CD4-positive, alpha-beta T cell (primary cell): ENCODE measurements at regions of chr3 and their contacts with region 1.

Region 1: GRCh38 chr3:105691633-105692032 is 177.2 kb downstream of the CBLB start:
- DNase-seq: no peak
- ATAC-seq: no peak
- H3K4me3 ChIP-seq: no peak overlapping the region
- H3K4me3 Mint-ChIP-seq: no peak overlapping the region
- H3K27ac ChIP-seq: no peak overlapping the region
- H3K27ac Mint-ChIP-seq: peak overlapping the region; percentile 26
- H3K4me1 ChIP-seq: no peaks in the 10 kb centered on the region
- H3K4me1 Mint-ChIP-seq: peaks cover 48% of the 10 kb centered on the region
- H3K27me3 ChIP-seq: no peaks in the 10 kb centered on the region
- H3K27me3 Mint-ChIP-seq: no peaks in the 10 kb centered on the region
- CTCF ChIP-seq: no peak

Region 2: DNA sequence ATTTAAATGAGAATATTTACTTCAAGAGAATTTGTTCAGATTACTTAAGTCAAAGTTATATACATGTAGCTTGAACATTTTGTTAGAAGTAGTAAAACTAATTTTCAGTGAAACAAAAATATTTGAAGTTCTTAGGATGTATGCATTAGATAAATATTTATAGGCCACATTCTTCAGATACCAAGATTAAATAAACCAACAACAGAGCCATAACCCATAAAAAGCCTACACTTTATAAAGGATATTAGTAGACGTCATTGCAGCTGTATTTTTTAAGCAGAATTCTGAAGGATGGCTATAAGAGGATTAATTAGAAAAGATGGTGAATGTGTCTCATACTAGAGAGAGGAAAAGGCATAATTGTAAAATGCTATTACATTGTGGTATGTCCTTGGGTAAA is 774.7 kb before region 1 on chr3:
- CTCF ChIA-PET with region 1: no interaction called
- POLR2A ChIA-PET with region 1: no interaction called
- intact Hi-C with region 1: no loop called
- DNase-seq: no peak
- ATAC-seq: no peak
- H3K4me3 ChIP-seq: no peak overlapping the region
- H3K4me3 Mint-ChIP-seq: no peak overlapping the region
- H3K27ac ChIP-seq: no peak overlapping the region
- H3K27ac Mint-ChIP-seq: no peak overlapping the region
- H3K4me1 ChIP-seq: no peaks in the 10 kb centered on the region
- H3K4me1 Mint-ChIP-seq: no peaks in the 10 kb centered on the region
- H3K27me3 ChIP-seq: no peaks in the 10 kb centered on the region
- H3K27me3 Mint-ChIP-seq: no peaks in the 10 kb centered on the region
- CTCF ChIP-seq: no peak

Region 3: GRCh38 chr3:105862217-105862616 is 170.6 kb after region 1 on chr3:
- CTCF ChIA-PET with region 1: no interaction called
- POLR2A ChIA-PET with region 1: no interaction called
- intact Hi-C with region 1: loop called in 1 of 2 experiments (anchors 5 kb)
- DNase-seq: peak in 3 of 14 experiments; percentile 28 to 48 (median 35)
- ATAC-seq: peak; percentile 45
- H3K4me3 ChIP-seq: peak overlapping the region; percentile 8
- H3K4me3 Mint-ChIP-seq: no peak overlapping the region
- H3K27ac ChIP-seq: no peak overlapping the region
- H3K27ac Mint-ChIP-seq: no peak overlapping the region
- H3K4me1 ChIP-seq: peaks cover 4% of the 10 kb centered on the region
- H3K4me1 Mint-ChIP-seq: peaks cover 53% of the 10 kb centered on the region
- H3K27me3 ChIP-seq: no peaks in the 10 kb centered on the region
- H3K27me3 Mint-ChIP-seq: no peaks in the 10 kb centered on the region
- CTCF ChIP-seq: no peak

Region 4: DNA sequence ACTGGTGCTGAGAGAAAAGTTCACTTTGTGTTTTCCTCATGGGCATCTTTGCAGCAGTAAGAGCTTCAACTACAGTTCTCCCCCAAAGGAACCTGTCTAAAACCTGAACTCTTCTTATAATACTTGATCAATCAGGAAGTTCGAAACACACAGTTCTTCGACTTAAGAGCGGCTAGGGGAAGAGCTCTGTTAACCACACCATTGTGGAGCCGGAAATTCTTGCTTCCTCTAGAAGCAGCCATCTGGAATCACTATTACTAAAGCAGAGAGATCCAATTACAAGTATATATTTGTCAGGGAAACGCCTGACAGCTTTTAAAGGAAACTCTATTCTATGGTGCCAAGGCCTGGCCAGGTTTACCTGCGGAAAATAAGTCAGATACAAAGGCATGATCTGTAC is 514.5 kb after region 1 on chr3:
- CTCF ChIA-PET with region 1: no interaction called
- POLR2A ChIA-PET with region 1: no interaction called
- intact Hi-C with region 1: loop called (anchors 1 to 5 kb)
- DNase-seq: peak in 4 of 14 experiments; percentile 26 to 68 (median 52)
- ATAC-seq: peak; percentile 80
- H3K4me3 ChIP-seq: peak overlapping the region; percentile 38
- H3K4me3 Mint-ChIP-seq: peak overlapping the region; percentile 62
- H3K27ac ChIP-seq: peak overlapping the region in 1 of 2 donors; percentile 3
- H3K27ac Mint-ChIP-seq: peak overlapping the region; percentile 69
- H3K4me1 ChIP-seq: peaks cover 7% of the 10 kb centered on the region
- H3K4me1 Mint-ChIP-seq: peaks cover 32% of the 10 kb centered on the region
- H3K27me3 ChIP-seq: no peaks in the 10 kb centered on the region
- H3K27me3 Mint-ChIP-seq: no peaks in the 10 kb centered on the region
- CTCF ChIP-seq: no peak